Testis (tissue), 5 donors: ENCODE measurements at regions of chr16 and their contacts with region 1.

Region 1: DNA sequence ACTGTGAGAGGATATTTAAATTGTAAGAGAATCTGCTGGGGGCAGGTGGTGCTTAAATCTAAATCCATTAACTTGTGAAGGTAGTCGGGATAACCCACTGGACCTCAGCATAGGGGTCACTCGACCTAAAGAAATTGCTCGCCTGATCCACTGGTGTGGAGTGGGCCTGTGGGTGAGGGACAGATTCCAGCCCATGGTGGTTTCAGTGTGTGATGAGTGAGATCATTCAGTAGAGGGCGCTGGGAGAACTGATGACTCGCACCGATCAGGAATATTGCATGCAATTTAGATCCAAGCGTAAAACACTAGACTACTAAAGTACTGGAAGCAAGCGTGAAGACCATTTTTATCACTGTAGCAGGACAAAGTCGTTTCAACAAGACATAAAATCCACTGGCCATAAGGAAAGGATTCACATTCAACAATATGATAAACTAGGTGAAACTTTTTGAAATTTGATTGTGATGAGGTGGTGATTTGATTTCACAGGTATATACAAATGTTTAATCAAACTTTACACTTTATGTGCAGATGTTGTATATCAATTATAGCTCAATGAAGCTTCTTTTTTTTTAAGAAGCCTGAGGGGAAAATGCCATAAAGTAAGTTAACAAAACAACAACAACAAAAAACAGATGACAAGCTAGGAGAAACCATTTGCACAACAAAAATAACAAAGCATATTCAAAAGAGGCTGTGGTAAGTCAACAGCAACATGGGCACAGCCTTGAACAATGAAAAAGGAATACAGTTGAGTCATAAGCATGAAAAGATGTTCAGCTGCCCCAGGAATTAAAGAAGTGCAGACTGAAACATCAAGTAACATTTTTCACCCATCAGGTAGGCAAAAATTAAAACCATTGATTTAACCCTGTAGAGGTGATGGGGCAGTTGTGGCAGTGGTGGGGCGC is 7.5 kb upstream of the TMEM170A start:
- DNase-seq: peak; percentile 77
- H3K4me3 ChIP-seq: no peak overlapping the region
- H3K27ac ChIP-seq: no peak overlapping the region
- H3K4me1 ChIP-seq: no peaks in the 10 kb centered on the region
- H3K27me3 ChIP-seq: no peaks in the 10 kb centered on the region
- CTCF ChIP-seq: peak; percentile 53 to 74 (median 56)
- POLR2A ChIP-seq: no peak

Region 2: DNA sequence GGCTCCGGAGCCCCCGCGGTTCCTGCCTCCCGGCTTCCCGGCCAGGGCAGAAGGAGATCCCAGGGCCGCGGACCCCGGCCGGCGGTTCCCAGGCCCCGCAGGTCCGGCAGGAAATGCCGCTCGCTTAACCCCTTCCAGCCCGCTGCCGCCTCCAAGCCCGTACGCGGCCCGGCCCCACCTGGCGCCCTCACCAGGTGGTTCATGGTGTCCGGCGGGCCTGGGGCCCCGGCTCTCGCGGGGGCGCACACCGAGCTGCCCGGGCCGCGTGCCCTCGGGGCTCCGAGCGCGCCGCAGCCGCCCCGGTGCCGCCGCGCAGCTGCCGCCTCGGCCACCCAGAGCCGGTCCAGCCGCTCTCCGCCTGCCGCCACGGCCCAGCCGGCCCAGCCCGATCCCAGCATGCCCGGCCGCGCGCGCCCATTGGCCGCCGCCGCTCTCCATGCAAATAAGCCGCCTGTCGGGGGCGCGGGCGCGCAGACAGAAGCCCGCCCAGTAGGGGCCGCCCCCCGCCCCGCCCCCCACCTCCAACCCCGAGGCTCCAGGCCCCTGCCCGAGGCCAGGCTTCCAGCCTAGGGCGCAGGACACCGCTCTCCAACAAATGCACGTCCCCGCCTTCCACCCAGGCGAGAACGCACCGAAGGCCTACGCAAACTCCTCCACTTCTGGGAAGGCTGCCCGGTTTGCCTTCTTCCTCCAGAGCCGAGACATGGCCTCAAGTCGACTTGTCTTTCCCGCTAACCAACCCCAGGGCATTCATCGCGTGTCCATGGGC is 220.5 kb before region 1 on chr16 and contains the start of gene BCAR1:
- intact Hi-C with region 1: no loop called
- DNase-seq: peak; percentile 93
- H3K4me3 ChIP-seq: peak within 1 kb of the TSS; percentile 78 to 91
- H3K27ac ChIP-seq: peak within 1 kb of the TSS; percentile 80 to 90
- H3K4me1 ChIP-seq: peaks cover 84% of the 10 kb centered on the region
- H3K27me3 ChIP-seq: no peaks in the 10 kb centered on the region
- CTCF ChIP-seq: no peak
- POLR2A ChIP-seq: no peak
- total RNA-seq, gene BCAR1: 139 to 201 TPM

Region 3: GRCh38 chr16:75317101-75317522 is 154.9 kb before region 1 on chr16:
- intact Hi-C with region 1: no loop called
- DNase-seq: peak; percentile 64
- H3K4me3 ChIP-seq: no peak overlapping the region
- H3K27ac ChIP-seq: peak overlapping the region; percentile 17 to 39
- H3K4me1 ChIP-seq: peaks cover 26% of the 10 kb centered on the region
- H3K27me3 ChIP-seq: no peaks in the 10 kb centered on the region
- CTCF ChIP-seq: no peak
- POLR2A ChIP-seq: no peak

Region 4: DNA sequence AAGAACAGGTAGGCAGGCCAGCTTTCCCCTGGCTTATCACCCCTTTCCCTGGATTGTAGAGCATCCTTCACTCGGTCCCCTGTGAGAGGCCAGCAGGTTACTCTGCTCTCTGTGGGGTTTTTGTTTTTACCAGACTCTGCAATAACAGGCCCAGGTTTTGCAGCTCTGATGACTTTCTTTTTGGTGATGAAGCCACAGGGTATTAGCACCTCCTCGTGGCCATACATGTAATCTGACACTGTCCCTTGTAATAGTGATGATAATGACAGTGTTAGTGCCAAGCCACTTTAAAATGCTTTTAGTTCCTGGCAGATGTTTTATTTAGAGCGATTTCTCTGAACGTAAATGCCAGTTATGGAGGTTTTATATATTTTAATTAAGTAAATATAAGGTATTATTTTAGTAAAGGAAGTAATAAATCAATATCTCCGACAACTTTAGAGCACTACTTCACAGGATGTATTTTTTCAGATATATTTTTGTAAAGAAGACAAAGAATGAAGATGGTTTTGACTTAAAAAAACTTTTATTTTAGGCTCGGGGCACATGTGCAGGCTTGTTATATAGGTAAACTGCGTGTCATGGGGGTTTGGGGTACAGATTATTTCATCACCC is 292.3 kb after region 1 on chr16:
- intact Hi-C with region 1: loop called (anchors 5 kb)
- DNase-seq: peak; percentile 73
- H3K4me3 ChIP-seq: no peak overlapping the region
- H3K27ac ChIP-seq: no peak overlapping the region
- H3K4me1 ChIP-seq: no peaks in the 10 kb centered on the region
- H3K27me3 ChIP-seq: no peaks in the 10 kb centered on the region
- CTCF ChIP-seq: peak in 2 of 3 experiments; percentile 70 to 77
- POLR2A ChIP-seq: no peak